ENCODE measurements at regions of chr19 and their contacts with region 1.

Region 1: DNA sequence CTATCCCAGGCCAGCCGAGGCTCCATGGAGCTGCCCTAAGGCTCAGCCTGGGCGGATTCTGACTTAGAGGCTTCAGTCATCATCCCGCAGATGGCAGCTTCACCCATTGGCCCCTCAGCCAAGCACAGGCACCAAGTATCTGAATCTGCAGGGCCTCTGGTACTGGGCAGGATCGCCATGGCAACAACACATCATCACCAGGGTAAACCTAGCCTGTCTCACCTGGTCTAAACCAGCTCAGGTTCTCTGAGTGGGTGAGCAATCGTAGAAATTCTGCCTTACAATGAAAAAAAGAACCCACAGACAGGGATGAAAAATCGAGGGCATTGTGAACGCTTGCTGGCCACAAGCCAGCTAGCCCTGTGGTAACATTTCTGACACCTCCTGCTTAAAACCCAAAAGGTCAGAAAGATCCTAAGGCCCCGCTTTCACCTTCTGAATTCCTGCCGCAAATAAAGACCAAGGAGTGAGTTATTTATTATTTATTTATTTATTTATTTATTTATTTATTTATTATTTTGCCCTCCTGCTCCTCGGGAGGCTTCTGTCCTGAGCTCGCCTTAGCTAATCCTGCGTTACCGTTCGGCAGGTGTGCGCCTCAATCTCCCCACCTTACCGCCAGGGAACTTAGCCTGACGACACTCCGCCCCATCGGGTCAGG is 12.0 kb upstream of the CEACAM21 start:
- DNase-seq: no peak
- H3K4me3 ChIP-seq: no peak overlapping the region
- H3K27me3 ChIP-seq: peaks cover 22% of the 10 kb centered on the region
- CTCF ChIP-seq: no peak

Region 2: GRCh38 chr19:41484822-41485221 is 79.2 kb before region 1 on chr19:
- CTCF ChIA-PET with region 1: no interaction called
- POLR2A ChIA-PET with region 1: no interaction called
- DNase-seq: no peak
- H3K4me3 ChIP-seq: no peak overlapping the region
- H3K27me3 ChIP-seq: no peaks in the 10 kb centered on the region; the same call in 1 of the 2 replicates
- CTCF ChIP-seq: no peak

Region 3: GRCh38 chr19:41541990-41542584 is 21.9 kb before region 1 on chr19:
- CTCF ChIA-PET with region 1: interaction called, 10 read pairs
- POLR2A ChIA-PET with region 1: no interaction called
- DNase-seq: no peak
- H3K4me3 ChIP-seq: no peak overlapping the region
- H3K27me3 ChIP-seq: peaks cover 6% of the 10 kb centered on the region; the same call in 1 of the 2 replicates
- CTCF ChIP-seq: peak; percentile 62

Measured in BJ (cell line).